ENCODE measurements at regions of chr9 and their contacts with region 1.

Region 1: GRCh38 chr9:133992780-133993634 is 883 bp upstream of the VAV2 start:
- DNase-seq: peak in 4 of 10 donors; percentile 45 to 62 (median 48)
- H3K4me3 ChIP-seq: peak overlapping the region; percentile 42 to 73 (median 64)
- H3K27ac ChIP-seq: peak overlapping the region in 45 of 59 donors; percentile 10 to 83 (median 57)
- H3K27me3 ChIP-seq: peaks cover 0 to 24% (median 0%) of the 10 kb centered on the region in 45 donors
- CTCF ChIP-seq: peak in 49 of 56 donors; percentile 20 to 68 (median 44)

Region 2: DNA sequence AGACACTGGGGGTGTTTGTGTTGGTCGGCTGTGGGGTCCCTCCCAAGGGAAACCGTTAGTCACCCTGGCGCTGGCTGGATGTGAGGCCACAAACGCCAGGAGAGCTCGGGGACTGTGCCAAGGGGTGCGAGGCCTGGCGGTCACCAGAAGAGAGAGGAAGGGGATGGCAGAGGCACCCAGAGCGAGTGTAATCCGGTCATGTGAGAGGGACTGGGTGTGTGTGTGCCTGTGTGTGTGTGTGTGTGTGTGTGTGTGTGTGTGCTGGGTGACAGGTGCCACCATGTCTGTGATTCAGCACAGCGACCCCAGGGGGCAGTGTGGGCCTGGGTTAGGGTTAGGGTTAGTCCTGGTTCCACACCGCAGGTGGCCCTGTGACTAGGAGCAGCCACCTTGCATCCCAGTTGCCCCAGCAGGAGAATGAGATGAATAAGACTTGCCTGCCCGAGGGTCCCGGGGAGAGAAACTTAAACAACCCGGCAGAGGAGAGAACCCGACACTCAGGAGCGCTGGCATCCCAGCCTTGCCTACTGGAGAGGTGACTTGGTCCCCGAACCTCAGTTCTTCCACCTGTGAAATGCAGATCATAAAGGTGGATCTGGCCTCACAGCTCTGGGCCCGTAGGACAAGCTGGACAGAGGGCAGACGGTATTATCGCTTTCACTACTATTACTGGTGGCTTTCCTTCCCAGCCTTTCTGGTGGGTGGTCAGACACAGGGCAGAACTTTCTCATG is 459.9 kb before region 1 on chr9:
- intact Hi-C with region 1: loop called in 1 of 2 experiments (anchors 10 kb)
- DNase-seq: peak in 8 of 10 donors; percentile 55 to 78 (median 72)
- H3K4me3 ChIP-seq: peak overlapping the region in 2 of 59 donors; percentile 70
- H3K27ac ChIP-seq: peak overlapping the region in 38 of 59 donors; percentile 9 to 91 (median 85)
- H3K27me3 ChIP-seq: no peaks in the 10 kb centered on the region
- CTCF ChIP-seq: peak in 51 of 56 donors; percentile 23 to 72 (median 46)

Region 3: DNA sequence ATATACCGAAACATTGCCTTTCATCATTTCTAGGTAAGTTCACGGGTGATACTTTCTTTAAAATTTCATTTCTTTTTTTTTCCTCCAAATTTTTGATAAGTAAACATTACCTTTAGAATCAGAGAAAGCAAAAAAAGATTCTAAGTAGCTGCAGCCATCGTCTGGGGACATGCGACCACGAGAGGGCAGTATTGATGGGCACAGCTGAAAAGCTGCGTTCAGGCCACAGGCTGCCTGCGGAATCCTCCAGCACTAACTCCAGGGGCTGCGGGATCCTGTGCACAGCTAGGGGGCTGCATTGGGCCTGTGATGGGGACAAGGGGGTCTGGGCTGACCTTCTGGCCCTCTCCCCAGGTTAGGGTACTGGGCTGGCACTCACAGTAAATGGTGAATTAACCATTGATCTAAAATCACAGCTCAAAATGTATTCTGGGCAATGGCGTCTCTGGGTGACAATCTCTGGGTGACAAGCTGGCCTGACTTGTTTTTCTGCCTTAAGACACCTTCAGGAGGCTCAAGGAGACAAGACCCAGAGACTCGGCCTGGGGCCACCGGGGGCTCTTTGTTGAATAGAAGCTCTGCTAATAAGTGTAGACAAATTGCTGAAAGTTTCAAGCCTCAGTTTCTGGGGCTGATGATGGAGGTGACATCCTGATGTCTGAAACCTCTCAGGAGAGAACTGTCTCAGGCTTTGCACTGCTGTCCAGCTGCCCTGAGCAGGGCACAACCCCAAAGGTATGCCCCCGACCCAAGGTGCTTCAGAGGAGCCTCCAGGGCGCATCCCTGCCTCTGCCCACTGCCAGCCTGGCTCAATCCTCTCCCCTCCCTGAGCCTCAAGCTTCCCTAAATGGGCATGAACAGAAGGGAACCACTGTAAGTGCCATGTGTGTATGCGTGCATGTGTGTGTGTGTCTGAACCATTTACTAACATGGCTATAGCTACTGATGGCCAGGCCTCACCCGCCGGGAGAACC is 210.6 kb before region 1 on chr9:
- intact Hi-C with region 1: loop called in 1 of 2 experiments (anchors 1 kb)
- DNase-seq: peak; percentile 68 to 87 (median 82)
- H3K4me3 ChIP-seq: no peak overlapping the region
- H3K27ac ChIP-seq: no peak overlapping the region
- H3K27me3 ChIP-seq: no peaks in the 10 kb centered on the region
- CTCF ChIP-seq: peak; percentile 51 to 91 (median 83)

Region 4: DNA sequence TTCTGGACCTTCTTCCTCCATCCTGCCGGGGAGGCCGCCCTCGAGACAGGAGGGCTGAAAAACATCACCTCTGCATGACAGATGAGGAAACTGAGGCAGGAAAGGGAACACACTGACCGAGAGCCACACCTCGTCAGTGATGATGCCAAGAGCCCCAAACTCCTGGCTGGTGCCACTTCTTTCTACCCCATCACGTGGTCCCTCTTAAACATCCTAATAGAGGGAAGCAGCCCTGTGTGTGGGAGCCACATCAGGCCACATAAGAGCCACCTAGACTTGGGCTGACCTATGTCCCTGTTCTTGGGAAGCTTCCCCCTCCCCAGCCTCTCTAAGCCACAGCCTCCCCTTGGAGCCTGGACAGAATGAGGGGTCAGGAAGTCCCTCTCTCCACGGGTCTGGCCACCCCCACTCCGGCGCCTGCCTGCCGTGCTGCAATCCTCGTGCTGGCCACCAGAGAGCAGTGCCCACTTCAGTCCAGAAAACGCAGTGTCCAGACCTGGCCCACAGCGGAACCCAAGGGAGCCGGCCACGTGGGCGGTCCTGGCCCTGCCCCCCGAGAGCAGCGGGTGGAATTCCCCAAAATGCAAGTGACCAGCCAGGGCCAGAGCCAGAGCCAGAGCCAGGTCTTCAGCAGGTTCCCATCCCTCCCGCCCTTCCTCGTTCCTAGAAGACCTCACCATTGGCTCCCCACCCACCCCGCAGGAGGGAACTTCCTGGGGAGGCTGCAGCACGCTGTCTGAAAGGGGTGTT is 200.1 kb before region 1 on chr9:
- intact Hi-C with region 1: loop called (anchors 1 kb)
- DNase-seq: peak; percentile 59 to 83 (median 72)
- H3K4me3 ChIP-seq: peak overlapping the region in 10 of 59 donors; percentile 10 to 34 (median 20)
- H3K27ac ChIP-seq: no peak overlapping the region
- H3K27me3 ChIP-seq: no peaks in the 10 kb centered on the region
- CTCF ChIP-seq: peak; percentile 75 to 99 (median 98)

Region 5: GRCh38 chr9:133862585-133863256 is 130.3 kb before region 1 on chr9:
- intact Hi-C with region 1: loop called in 1 of 2 experiments (anchors 5 kb)
- DNase-seq: peak in 5 of 10 donors; percentile 32 to 53 (median 47)
- H3K4me3 ChIP-seq: peak overlapping the region in 46 of 59 donors; percentile 0 to 57 (median 30)
- H3K27ac ChIP-seq: peak overlapping the region in 28 of 59 donors; percentile 2 to 69 (median 40)
- H3K27me3 ChIP-seq: no peaks in the 10 kb centered on the region
- CTCF ChIP-seq: peak in 26 of 56 donors; percentile 1 to 42 (median 19)

Region 6: GRCh38 chr9:133916159-133916541 is 76.9 kb before region 1 on chr9:
- intact Hi-C with region 1: loop called in 1 of 2 experiments (anchors 5 kb)
- DNase-seq: peak; percentile 23 to 85 (median 78)
- H3K4me3 ChIP-seq: peak overlapping the region in 31 of 59 donors; percentile 12 to 58 (median 35)
- H3K27ac ChIP-seq: peak overlapping the region in 56 of 59 donors; percentile 13 to 89 (median 78)
- H3K27me3 ChIP-seq: no peaks in the 10 kb centered on the region
- CTCF ChIP-seq: peak in 1 of 56 donors; percentile 24

Region 7: GRCh38 chr9:134381671-134382516 is 388.9 kb after region 1 on chr9:
- intact Hi-C with region 1: no loop called
- DNase-seq: no peak
- H3K4me3 ChIP-seq: no peak overlapping the region
- H3K27ac ChIP-seq: peak overlapping the region in 11 of 59 donors; percentile 6 to 76 (median 28)
- H3K27me3 ChIP-seq: no peaks in the 10 kb centered on the region
- CTCF ChIP-seq: no peak